HCT116 (cell line): ENCODE measurements at regions of chr15 and their contacts with region 1.

Region 1: GRCh38 chr15:98779463-98780071 is 131.2 kb downstream of the IGF1R start:
- DNase-seq: peak; percentile 49
- ATAC-seq: peak; percentile 99
- H3K4me3 ChIP-seq: peak overlapping the region; percentile 6 to 26; a peak in 2 of 4 replicates
- H3K27ac ChIP-seq: no peak overlapping the region
- H3K4me1 ChIP-seq: peaks cover 4 to 7% of the 10 kb centered on the region in 2 experiments; a peak in 2 of 4 replicates
- H3K27me3 ChIP-seq: no peaks in the 10 kb centered on the region
- CTCF ChIP-seq: peak; percentile 72 to 99 (median 93); a peak in 5 of 6 replicates
- POLR2A ChIP-seq: no peak
- RAD21 ChIP-seq: peak; percentile 85

Region 2: GRCh38 chr15:98537516-98538060 is 242.0 kb before region 1 on chr15:
- CTCF ChIA-PET with region 1: no interaction called
- POLR2A ChIA-PET with region 1: no interaction called
- RAD21 ChIA-PET with region 1: no interaction called
- intact Hi-C with region 1: no loop called
- DNase-seq: no peak
- ATAC-seq: no peak
- H3K4me3 ChIP-seq: no peak overlapping the region
- H3K27ac ChIP-seq: no peak overlapping the region
- H3K4me1 ChIP-seq: no peaks in the 10 kb centered on the region
- H3K27me3 ChIP-seq: peaks cover 51% of the 10 kb centered on the region
- CTCF ChIP-seq: no peak
- POLR2A ChIP-seq: no peak
- RAD21 ChIP-seq: no peak

Region 3: DNA sequence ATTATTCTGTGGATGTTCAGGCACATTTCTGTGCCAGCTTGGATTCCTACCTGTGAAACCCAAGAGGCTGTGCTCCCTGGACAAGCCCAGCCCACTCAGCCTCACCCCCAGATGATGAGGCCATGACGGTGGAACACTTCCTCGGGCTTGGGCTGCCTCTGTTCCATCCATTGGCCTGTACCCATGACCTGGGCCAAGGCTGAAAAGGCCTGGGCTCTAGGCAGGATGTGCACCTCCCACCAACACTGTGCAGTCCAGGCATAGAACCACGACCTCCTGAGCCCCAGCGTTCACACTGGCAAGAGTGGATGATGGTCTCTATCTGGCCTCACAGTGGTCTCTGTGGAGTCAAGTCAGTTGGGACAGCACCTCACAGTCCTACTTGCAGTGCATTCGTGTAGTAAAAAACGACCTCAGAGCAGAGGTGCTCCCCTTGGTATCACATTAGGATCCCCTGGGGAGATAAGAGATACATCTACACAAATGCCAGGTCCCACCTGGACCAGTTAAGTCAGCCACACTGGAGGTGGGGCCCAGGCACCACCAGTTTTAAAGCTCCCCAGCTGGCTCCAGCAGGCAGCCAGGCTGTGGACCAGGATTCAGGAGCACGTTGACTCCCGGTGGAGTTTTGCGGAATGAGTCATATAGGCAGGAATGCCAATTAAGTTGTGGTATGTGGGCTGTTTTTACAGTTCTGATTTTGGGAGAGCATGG is 170.3 kb before region 1 on chr15:
- CTCF ChIA-PET with region 1: no interaction called
- POLR2A ChIA-PET with region 1: no interaction called
- RAD21 ChIA-PET with region 1: no interaction called
- intact Hi-C with region 1: no loop called
- DNase-seq: peak; percentile 18
- ATAC-seq: peak; percentile 91
- H3K4me3 ChIP-seq: no peak overlapping the region
- H3K27ac ChIP-seq: no peak overlapping the region
- H3K4me1 ChIP-seq: peaks cover 9 to 14% of the 10 kb centered on the region in 2 experiments
- H3K27me3 ChIP-seq: peaks cover 1% of the 10 kb centered on the region; the same call in 1 of the 2 replicates
- CTCF ChIP-seq: no peak
- POLR2A ChIP-seq: no peak
- RAD21 ChIP-seq: no peak

Region 4: DNA sequence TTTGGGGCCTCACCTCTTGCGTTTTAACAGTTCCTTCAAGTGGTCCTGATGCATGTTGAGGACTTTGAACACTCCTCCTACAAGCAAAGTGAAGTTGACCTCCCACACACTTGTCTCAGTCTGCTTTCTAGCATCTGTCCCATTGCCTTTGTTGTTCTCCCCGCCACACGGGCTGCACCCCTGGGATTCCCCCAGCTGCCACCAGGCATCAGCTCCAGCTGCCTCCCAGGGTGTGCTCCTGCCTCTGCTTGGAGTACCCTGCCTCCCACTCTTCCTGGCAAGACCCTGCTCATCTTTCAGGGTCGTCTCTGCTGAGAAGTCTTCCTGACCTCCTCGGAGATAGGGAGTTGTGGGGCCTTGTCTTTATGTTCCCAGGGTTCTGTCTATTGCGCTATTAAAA is 79.0 kb before region 1 on chr15:
- CTCF ChIA-PET with region 1: no interaction called
- POLR2A ChIA-PET with region 1: no interaction called
- RAD21 ChIA-PET with region 1: no interaction called
- intact Hi-C with region 1: no loop called
- DNase-seq: no peak
- ATAC-seq: no peak
- H3K4me3 ChIP-seq: no peak overlapping the region
- H3K27ac ChIP-seq: no peak overlapping the region
- H3K4me1 ChIP-seq: no peaks in the 10 kb centered on the region
- H3K27me3 ChIP-seq: no peaks in the 10 kb centered on the region
- CTCF ChIP-seq: no peak
- POLR2A ChIP-seq: no peak
- RAD21 ChIP-seq: no peak

Region 5: GRCh38 chr15:98850961-98851573 is 71.5 kb after region 1 on chr15:
- CTCF ChIA-PET with region 1: interaction called, 10 read pairs
- POLR2A ChIA-PET with region 1: no interaction called
- RAD21 ChIA-PET with region 1: interaction called in 1 of 2 experiments, 6 read pairs
- intact Hi-C with region 1: no loop called
- DNase-seq: peak; percentile 35
- ATAC-seq: peak; percentile 72
- H3K4me3 ChIP-seq: peak overlapping the region in 1 of 2 experiments; percentile 68; a peak in 1 of 4 replicates
- H3K27ac ChIP-seq: no peak overlapping the region
- H3K4me1 ChIP-seq: peaks cover 19 to 32% of the 10 kb centered on the region in 2 experiments
- H3K27me3 ChIP-seq: no peaks in the 10 kb centered on the region
- CTCF ChIP-seq: peak; percentile 78 to 81 (median 79)
- POLR2A ChIP-seq: no peak
- RAD21 ChIP-seq: peak; percentile 93

Region 6: GRCh38 chr15:98881526-98882520 is 102.3 kb after region 1 on chr15:
- CTCF ChIA-PET with region 1: interaction called, 3 read pairs
- POLR2A ChIA-PET with region 1: no interaction called
- RAD21 ChIA-PET with region 1: no interaction called
- intact Hi-C with region 1: loop called (anchors 2 kb)
- DNase-seq: peak; percentile 31
- ATAC-seq: peak; percentile 84
- H3K4me3 ChIP-seq: no peak overlapping the region
- H3K27ac ChIP-seq: no peak overlapping the region
- H3K4me1 ChIP-seq: no peaks in the 10 kb centered on the region; a peak in 1 of 4 replicates
- H3K27me3 ChIP-seq: no peaks in the 10 kb centered on the region
- CTCF ChIP-seq: peak; percentile 51 to 68 (median 66); a peak in 5 of 6 replicates
- POLR2A ChIP-seq: no peak
- RAD21 ChIP-seq: peak; percentile 76

Region 7: GRCh38 chr15:99059010-99059981 is 279.7 kb after region 1 on chr15:
- CTCF ChIA-PET with region 1: no interaction called
- POLR2A ChIA-PET with region 1: no interaction called
- RAD21 ChIA-PET with region 1: no interaction called
- intact Hi-C with region 1: loop called (anchors 2 kb)
- DNase-seq: peak; percentile 6
- ATAC-seq: peak; percentile 96
- H3K4me3 ChIP-seq: peak overlapping the region; percentile 28 to 39; a peak in 2 of 4 replicates
- H3K27ac ChIP-seq: no peak overlapping the region
- H3K4me1 ChIP-seq: peaks cover 0 to 9% of the 10 kb centered on the region in 2 experiments; a peak in 1 of 4 replicates
- H3K27me3 ChIP-seq: peaks cover 5% of the 10 kb centered on the region; the same call in 1 of the 2 replicates
- CTCF ChIP-seq: peak; percentile 14 to 58 (median 57); a peak in 4 of 6 replicates
- POLR2A ChIP-seq: no peak
- RAD21 ChIP-seq: peak; percentile 43

Region 8: DNA sequence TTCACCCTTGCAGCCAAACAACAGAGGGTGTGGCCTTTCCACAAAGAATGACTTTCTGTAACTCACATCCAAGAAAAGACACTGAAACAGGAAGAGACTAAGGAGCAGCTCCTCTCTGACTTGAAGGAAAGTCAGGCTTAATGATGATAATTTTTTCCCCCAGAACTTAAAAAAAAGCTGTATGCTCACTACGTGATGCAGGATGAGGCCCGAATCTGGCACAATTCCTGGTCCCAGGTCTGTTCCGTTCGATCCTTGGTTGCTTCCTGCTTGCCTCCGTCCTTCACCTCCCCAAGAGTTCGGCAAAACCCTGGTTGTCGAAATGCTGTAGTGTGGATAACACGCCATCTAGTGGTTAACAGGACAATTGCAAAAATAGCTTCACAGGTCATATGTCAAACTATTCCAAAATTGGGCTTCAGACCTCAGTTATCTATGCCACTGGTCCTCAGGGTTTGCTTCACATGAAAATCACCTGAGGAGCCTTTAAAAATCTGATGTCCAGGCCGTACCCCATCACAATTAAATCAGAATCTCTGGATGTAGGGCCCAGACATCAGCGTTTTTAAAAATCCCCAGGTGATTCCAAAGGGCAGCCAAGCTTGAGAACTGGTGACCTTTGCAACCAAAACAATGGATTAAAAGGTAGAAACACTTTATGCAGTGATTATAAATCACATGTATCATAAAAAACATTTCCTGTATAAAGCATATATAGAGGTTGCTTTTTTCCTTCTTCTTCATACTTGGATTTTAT is 297.2 kb after region 1 on chr15:
- CTCF ChIA-PET with region 1: interaction called, 3 read pairs
- POLR2A ChIA-PET with region 1: no interaction called
- RAD21 ChIA-PET with region 1: no interaction called
- intact Hi-C with region 1: loop called (anchors 5 kb)
- DNase-seq: peak; percentile 68
- ATAC-seq: peak; percentile 96
- H3K4me3 ChIP-seq: peak overlapping the region; percentile 14 to 48; a peak in 3 of 4 replicates
- H3K27ac ChIP-seq: no peak overlapping the region
- H3K4me1 ChIP-seq: peaks cover 0 to 2% of the 10 kb centered on the region in 2 experiments; a peak in 2 of 4 replicates
- H3K27me3 ChIP-seq: no peaks in the 10 kb centered on the region
- CTCF ChIP-seq: peak; percentile 80 to 88 (median 83)
- POLR2A ChIP-seq: no peak
- RAD21 ChIP-seq: peak; percentile 96

Region 9: DNA sequence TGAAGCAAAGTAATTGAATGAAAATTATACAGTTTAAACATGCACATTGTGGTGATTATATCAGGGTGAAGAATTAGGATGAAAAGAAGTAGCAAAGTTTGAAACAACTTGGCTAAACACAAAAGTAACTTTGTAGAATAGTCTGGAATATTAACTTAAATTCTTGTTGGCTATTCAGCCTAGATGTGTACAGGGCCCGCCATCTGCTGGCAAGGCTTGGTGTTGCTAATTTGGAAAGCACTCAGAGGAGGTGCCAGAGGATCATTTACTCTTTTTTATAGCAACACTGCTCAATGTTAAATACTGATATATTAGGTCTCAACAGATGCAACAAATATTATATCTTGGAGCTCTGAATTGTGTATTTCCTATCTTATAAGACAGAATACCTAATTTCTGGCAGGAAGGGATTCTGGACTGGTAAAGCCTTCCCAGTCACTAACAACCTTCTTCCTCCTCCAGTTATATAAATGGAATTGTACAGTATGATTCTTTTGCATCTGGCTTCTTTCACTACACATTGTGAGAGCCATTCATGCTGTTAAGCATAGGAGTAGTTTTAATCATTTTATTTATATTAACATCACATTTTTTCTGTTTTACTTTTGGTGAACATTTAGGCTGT is 433.7 kb after region 1 on chr15:
- CTCF ChIA-PET with region 1: no interaction called
- POLR2A ChIA-PET with region 1: no interaction called
- RAD21 ChIA-PET with region 1: no interaction called
- intact Hi-C with region 1: loop called (anchors 10 kb)
- DNase-seq: peak; percentile 32
- ATAC-seq: peak; percentile 86
- H3K4me3 ChIP-seq: no peak overlapping the region
- H3K27ac ChIP-seq: no peak overlapping the region
- H3K4me1 ChIP-seq: no peaks in the 10 kb centered on the region
- H3K27me3 ChIP-seq: no peaks in the 10 kb centered on the region
- CTCF ChIP-seq: peak; percentile 85 to 97 (median 93)
- POLR2A ChIP-seq: no peak
- RAD21 ChIP-seq: peak; percentile 95

Region 10: DNA sequence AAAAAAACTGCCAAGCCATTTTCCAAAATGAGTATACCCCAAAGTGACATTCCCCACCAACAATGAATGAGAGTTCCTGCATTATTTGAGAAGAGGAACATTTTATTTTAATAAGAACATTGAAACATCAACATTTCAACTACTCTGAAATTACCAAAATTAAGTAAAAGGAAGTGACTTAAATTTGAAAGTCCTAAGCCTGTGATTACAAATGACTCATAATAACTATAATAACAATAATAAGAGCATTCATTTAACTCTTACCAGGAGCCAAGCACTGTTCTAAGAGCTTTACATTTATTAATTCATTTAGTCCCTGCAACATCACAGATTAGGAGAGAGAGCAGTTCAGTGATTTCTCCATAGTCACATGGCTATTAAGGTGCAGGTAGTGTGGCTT is 504.1 kb after region 1 on chr15:
- CTCF ChIA-PET with region 1: no interaction called
- POLR2A ChIA-PET with region 1: no interaction called
- RAD21 ChIA-PET with region 1: no interaction called
- intact Hi-C with region 1: no loop called
- DNase-seq: no peak
- ATAC-seq: no peak
- H3K4me3 ChIP-seq: no peak overlapping the region
- H3K27ac ChIP-seq: no peak overlapping the region
- H3K4me1 ChIP-seq: no peaks in the 10 kb centered on the region
- H3K27me3 ChIP-seq: no peaks in the 10 kb centered on the region
- CTCF ChIP-seq: no peak
- POLR2A ChIP-seq: no peak
- RAD21 ChIP-seq: no peak